Dorsolateral prefrontal cortex (tissue), 120 donors: ENCODE measurements at regions of chr2 and their contacts with region 1.

Region 1: GRCh38 chr2:135600915-135601314 is 69.6 kb downstream of the R3HDM1 start:
- DNase-seq: no peak
- H3K4me3 ChIP-seq: no peak overlapping the region
- H3K27ac ChIP-seq: peak overlapping the region in 2 of 59 donors; percentile 8 to 23
- H3K27me3 ChIP-seq: no peaks in the 10 kb centered on the region
- CTCF ChIP-seq: peak in 52 of 56 donors; percentile 18 to 72 (median 48)

Region 2: GRCh38 chr2:135004005-135004746 is 596.7 kb before region 1 on chr2:
- intact Hi-C with region 1: loop called (anchors 2 to 10 kb)
- DNase-seq: peak; percentile 62 to 85 (median 75)
- H3K4me3 ChIP-seq: peak overlapping the region in 7 of 59 donors; percentile 19 to 36 (median 25)
- H3K27ac ChIP-seq: no peak overlapping the region
- H3K27me3 ChIP-seq: peaks cover 0 to 6% (median 0%) of the 10 kb centered on the region in 45 donors
- CTCF ChIP-seq: peak; percentile 54 to 99 (median 90)

Region 3: GRCh38 chr2:135664623-135665068 is 63.7 kb after region 1 on chr2:
- intact Hi-C with region 1: no loop called
- DNase-seq: no peak
- H3K4me3 ChIP-seq: no peak overlapping the region
- H3K27ac ChIP-seq: peak overlapping the region in 2 of 59 donors; percentile 11 to 34
- H3K27me3 ChIP-seq: no peaks in the 10 kb centered on the region
- CTCF ChIP-seq: no peak

Region 4: GRCh38 chr2:135762022-135762421 is 161.1 kb after region 1 on chr2:
- intact Hi-C with region 1: no loop called
- DNase-seq: no peak
- H3K4me3 ChIP-seq: no peak overlapping the region
- H3K27ac ChIP-seq: no peak overlapping the region
- H3K27me3 ChIP-seq: no peaks in the 10 kb centered on the region
- CTCF ChIP-seq: no peak